SK-N-SH (cell line): ENCODE measurements at regions of chr15 and their contacts with region 1.

Region 1: DNA sequence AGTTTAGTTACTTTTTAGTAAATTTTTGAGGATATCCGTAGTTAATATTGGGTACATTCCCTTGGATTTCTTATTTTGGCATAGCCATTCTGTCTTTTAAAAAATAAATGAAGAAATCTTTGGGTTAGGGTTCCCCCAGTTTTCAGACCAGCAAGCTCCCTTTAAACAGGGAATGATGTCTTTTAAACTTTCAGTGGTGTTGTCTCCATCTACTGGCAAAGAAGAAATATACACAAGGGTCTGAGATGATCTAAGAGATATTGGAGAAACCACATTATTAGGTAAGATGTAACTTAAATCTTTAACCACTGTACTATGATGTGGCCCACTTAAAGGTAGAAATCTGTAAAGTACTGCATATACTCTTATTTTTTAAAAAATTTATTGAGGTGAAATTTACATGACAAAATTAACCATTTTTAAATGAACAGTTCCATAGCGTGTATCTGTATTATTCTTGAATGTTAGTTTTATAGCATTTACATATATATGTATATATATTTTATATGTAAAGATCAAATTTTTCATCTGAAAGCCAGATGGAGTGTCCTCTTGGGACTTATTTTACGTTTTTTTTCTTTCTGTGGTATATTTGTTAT is 35.1 kb upstream of the EIF3J start:
- DNase-seq: peak; percentile 54
- H3K4me3 ChIP-seq: no peak overlapping the region
- H3K27ac ChIP-seq: no peak overlapping the region
- H3K4me1 ChIP-seq: no peaks in the 10 kb centered on the region
- H3K27me3 ChIP-seq: no peaks in the 10 kb centered on the region
- CTCF ChIP-seq: peak; percentile 78
- EP300 ChIP-seq: no peak
- RAD21 ChIP-seq: peak; percentile 76

Region 2: GRCh38 chr15:44219073-44219472 is 282.8 kb before region 1 on chr15:
- CTCF ChIA-PET with region 1: interaction called, 12 read pairs
- POLR2A ChIA-PET with region 1: no interaction called
- DNase-seq: no peak
- H3K4me3 ChIP-seq: no peak overlapping the region
- H3K27ac ChIP-seq: peak overlapping the region in 1 of 2 experiments; percentile 26; a peak in 1 of 4 replicates
- H3K4me1 ChIP-seq: peaks cover 0 to 15% of the 10 kb centered on the region in 2 experiments; a peak in 3 of 4 replicates
- H3K27me3 ChIP-seq: no peaks in the 10 kb centered on the region
- CTCF ChIP-seq: no peak
- EP300 ChIP-seq: no peak
- RAD21 ChIP-seq: 0 out of 2 replicates have a peak, but pooled peaks have one; percentile 3

Region 3: DNA sequence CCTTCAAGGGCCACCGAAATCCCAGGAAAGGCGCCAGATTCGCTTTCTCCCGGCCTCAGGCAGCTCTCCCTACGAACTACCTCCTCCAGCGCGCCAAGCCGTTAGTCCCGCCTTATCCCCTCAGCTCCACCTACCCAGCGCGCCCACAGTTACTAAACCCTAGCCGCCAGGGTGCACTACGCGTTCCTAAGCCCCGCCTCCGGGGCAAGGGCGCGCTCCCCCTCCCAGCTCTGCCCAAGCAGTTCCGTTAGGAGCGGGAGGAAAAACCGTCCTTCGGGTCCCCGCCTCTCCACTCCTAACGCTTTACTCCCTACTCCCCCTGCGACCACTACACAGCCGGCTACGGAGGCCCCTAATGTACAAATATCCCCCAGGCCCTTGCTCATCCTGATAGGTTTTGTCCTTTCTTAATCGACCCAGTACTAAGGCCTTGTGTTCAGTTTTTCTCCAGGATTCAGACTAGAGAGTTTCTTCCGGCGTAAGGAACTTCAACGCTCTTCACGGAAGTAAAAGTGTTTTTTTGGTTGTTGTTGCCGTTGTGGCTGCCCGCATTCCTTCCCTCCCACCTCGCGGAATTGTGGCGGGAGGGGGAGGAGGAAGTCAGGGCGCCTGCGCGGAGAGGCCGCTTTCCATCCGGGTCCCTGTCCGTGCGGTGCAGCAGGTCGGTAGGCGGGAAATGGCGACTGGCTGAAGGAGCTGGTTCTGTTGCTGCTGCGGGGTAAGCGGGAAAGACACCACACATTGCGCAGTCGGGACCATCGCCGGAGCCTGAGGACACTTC is 74.7 kb before region 1 on chr15 and contains the start of gene CTDSPL2:
- CTCF ChIA-PET with region 1: interaction called, 18 read pairs
- POLR2A ChIA-PET with region 1: interaction called, 3 read pairs
- DNase-seq: peak; percentile 89
- H3K4me3 ChIP-seq: peak within 1 kb of the TSS; percentile 76 to 86
- H3K27ac ChIP-seq: peak within 1 kb of the TSS; percentile 99
- H3K4me1 ChIP-seq: peaks cover 0 to 3% of the 10 kb centered on the region in 2 experiments; a peak in 2 of 4 replicates
- H3K27me3 ChIP-seq: no peaks in the 10 kb centered on the region
- CTCF ChIP-seq: peak; percentile 37; the same call in 1 of the 2 replicates
- EP300 ChIP-seq: peak in 1 of 2 experiments; percentile 36; a peak in 1 of 4 replicates
- RAD21 ChIP-seq: no peak; the same call in 1 of the 2 replicates
- polyA plus RNA-seq, gene CTDSPL2: 9.0 and 13.7 TPM in 2 replicates

Region 4: GRCh38 chr15:44489464-44489863 is 12.4 kb before region 1 on chr15:
- CTCF ChIA-PET with region 1: interaction called, 15 read pairs
- POLR2A ChIA-PET with region 1: interaction called, 5 read pairs
- DNase-seq: no peak
- H3K4me3 ChIP-seq: no peak overlapping the region
- H3K27ac ChIP-seq: peak overlapping the region in 1 of 2 experiments; percentile 78; a peak in 2 of 4 replicates
- H3K4me1 ChIP-seq: peaks cover 0 to 16% of the 10 kb centered on the region in 2 experiments; a peak in 2 of 4 replicates
- H3K27me3 ChIP-seq: no peaks in the 10 kb centered on the region
- CTCF ChIP-seq: no peak
- EP300 ChIP-seq: peak in 1 of 2 experiments; percentile 41; a peak in 1 of 4 replicates
- RAD21 ChIP-seq: no peak

Region 5: GRCh38 chr15:44636976-44637375 is 135.1 kb after region 1 on chr15:
- CTCF ChIA-PET with region 1: no interaction called
- POLR2A ChIA-PET with region 1: no interaction called
- DNase-seq: peak; percentile 11
- H3K4me3 ChIP-seq: no peak overlapping the region
- H3K27ac ChIP-seq: no peak overlapping the region
- H3K4me1 ChIP-seq: no peaks in the 10 kb centered on the region; a peak in 1 of 4 replicates
- H3K27me3 ChIP-seq: no peaks in the 10 kb centered on the region
- CTCF ChIP-seq: no peak
- EP300 ChIP-seq: no peak
- RAD21 ChIP-seq: no peak